ENCODE measurements at regions of chr14 and their contacts with region 1.

Region 1: GRCh38 chr14:69715725-69716477 is 51.0 kb upstream of the SRSF5 start:
- DNase-seq: no peak
- CTCF ChIP-seq: no peak

Region 2: DNA sequence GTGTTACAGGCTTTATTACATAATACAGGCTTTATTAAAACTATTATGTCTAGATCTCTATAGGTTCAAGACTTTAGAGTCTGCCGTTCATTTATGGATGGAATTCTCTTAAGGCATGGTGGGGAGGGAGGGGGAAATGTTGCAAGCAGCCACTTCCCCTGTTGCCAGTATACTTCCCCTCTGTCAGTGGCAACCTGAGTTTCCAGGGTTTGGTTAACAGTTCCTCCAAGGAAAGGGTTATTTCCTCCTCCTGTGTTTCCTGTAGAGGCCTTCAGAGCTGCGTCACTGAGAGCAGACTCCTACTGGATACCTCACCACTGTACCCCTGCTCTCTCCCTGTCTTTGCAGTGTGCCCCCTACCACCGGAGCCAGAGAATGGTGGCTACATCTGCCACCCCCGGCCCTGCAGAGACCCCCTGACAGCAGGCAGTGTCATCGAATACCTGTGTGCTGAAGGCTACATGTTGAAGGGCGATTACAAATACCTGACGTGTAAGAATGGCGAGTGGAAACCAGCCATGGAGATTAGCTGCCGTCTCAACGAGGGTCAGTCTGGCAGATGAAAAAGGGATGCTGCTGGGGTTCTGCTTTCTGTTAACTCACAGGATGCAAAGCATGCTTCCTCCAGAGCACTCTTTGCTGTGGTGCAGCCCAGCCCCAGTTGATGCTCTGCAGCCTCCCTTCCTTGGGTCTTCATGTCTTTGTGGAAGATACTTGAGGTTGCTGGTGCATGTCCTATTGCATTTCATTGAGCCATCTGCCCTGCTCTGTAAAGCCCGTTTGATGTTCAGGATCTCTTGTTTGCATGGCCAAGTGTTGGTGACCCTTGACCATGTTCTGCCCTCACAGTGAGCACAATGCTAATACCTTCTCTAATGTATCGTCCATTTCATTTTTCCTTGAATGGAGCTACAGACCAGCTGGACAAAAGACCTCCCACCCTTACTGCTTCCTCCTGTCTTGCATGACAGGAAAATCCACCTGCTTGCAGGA is 12.6 kb before region 1 on chr14:
- CTCF ChIA-PET with region 1: interaction called, 14 read pairs
- POLR2A ChIA-PET with region 1: interaction called, 4 read pairs
- DNase-seq: no peak
- CTCF ChIP-seq: no peak

Region 3: DNA sequence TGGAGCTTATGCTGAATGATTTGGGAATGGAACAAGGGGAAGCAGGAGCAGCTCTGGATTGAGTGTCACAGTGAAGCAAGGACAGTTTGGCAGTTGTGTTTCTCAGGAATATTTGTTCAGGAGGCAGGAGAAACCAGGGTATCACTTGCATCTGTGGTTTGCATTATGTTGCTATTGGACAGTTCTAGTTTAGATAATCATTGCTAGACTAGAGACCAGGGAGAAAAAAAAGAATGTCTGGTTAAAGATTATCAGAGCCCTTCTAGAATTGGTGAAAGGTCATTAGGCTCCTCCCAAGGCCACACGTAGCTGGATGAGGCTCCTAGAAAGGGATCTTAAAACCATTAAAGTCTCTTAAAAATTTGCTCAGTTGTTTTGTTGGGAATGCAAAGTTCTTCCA is 34.1 kb after region 1 on chr14:
- CTCF ChIA-PET with region 1: no interaction called
- POLR2A ChIA-PET with region 1: no interaction called
- DNase-seq: no peak
- CTCF ChIP-seq: no peak